PC-9 (cell line): ENCODE measurements at regions of chr1 and their contacts with region 1.

Region 1: GRCh38 chr1:20212685-20213331 is 26.5 kb upstream of the PLA2G2C start:
- DNase-seq: peak; percentile 90 to 92
- H3K4me3 ChIP-seq: peak overlapping the region; percentile 47; the same call in 1 of the 2 replicates
- H3K27ac ChIP-seq: peak overlapping the region; percentile 99
- H3K4me1 ChIP-seq: peaks cover 58% of the 10 kb centered on the region
- H3K27me3 ChIP-seq: no peaks in the 10 kb centered on the region
- CTCF ChIP-seq: peak; percentile 91

Region 2: GRCh38 chr1:19534281-19534680 is 678.5 kb before region 1 on chr1:
- CTCF ChIA-PET with region 1: no interaction called
- POLR2A ChIA-PET with region 1: no interaction called
- intact Hi-C with region 1: no loop called
- DNase-seq: no peak
- H3K4me3 ChIP-seq: no peak overlapping the region
- H3K27ac ChIP-seq: no peak overlapping the region
- H3K4me1 ChIP-seq: no peaks in the 10 kb centered on the region
- H3K27me3 ChIP-seq: no peaks in the 10 kb centered on the region
- CTCF ChIP-seq: no peak

Region 3: GRCh38 chr1:19974822-19975416 is 237.9 kb before region 1 on chr1:
- CTCF ChIA-PET with region 1: no interaction called
- POLR2A ChIA-PET with region 1: interaction called, 10 read pairs
- intact Hi-C with region 1: no loop called
- DNase-seq: peak; percentile 58 to 62
- H3K4me3 ChIP-seq: no peak overlapping the region
- H3K27ac ChIP-seq: no peak overlapping the region
- H3K4me1 ChIP-seq: no peaks in the 10 kb centered on the region
- H3K27me3 ChIP-seq: no peaks in the 10 kb centered on the region
- CTCF ChIP-seq: peak; percentile 66

Region 4: GRCh38 chr1:20194757-20195461 is 17.9 kb before region 1 on chr1:
- CTCF ChIA-PET with region 1: interaction called, 18 read pairs
- POLR2A ChIA-PET with region 1: interaction called, 3 read pairs
- intact Hi-C with region 1: no loop called
- DNase-seq: peak in 1 of 2 experiments; percentile 49
- H3K4me3 ChIP-seq: no peak overlapping the region
- H3K27ac ChIP-seq: no peak overlapping the region
- H3K4me1 ChIP-seq: peaks cover 19% of the 10 kb centered on the region
- H3K27me3 ChIP-seq: no peaks in the 10 kb centered on the region
- CTCF ChIP-seq: peak; percentile 70

Region 5: GRCh38 chr1:20308569-20308968 is 95.8 kb after region 1 on chr1:
- CTCF ChIA-PET with region 1: interaction called, 11 read pairs
- POLR2A ChIA-PET with region 1: no interaction called
- intact Hi-C with region 1: no loop called
- DNase-seq: no peak
- H3K4me3 ChIP-seq: no peak overlapping the region
- H3K27ac ChIP-seq: no peak overlapping the region
- H3K4me1 ChIP-seq: no peaks in the 10 kb centered on the region
- H3K27me3 ChIP-seq: no peaks in the 10 kb centered on the region
- CTCF ChIP-seq: no peak

Region 6: GRCh38 chr1:20376880-20377494 is 164.2 kb after region 1 on chr1:
- CTCF ChIA-PET with region 1: interaction called, 5 read pairs
- POLR2A ChIA-PET with region 1: no interaction called
- intact Hi-C with region 1: loop called (anchors 2 kb)
- DNase-seq: peak in 1 of 2 experiments; percentile 53
- H3K4me3 ChIP-seq: no peak overlapping the region
- H3K27ac ChIP-seq: no peak overlapping the region
- H3K4me1 ChIP-seq: peaks cover 14% of the 10 kb centered on the region
- H3K27me3 ChIP-seq: no peaks in the 10 kb centered on the region
- CTCF ChIP-seq: peak; percentile 76

Region 7: GRCh38 chr1:20511518-20512370 is 298.9 kb after region 1 on chr1:
- CTCF ChIA-PET with region 1: interaction called, 13 read pairs
- POLR2A ChIA-PET with region 1: no interaction called
- intact Hi-C with region 1: no loop called
- DNase-seq: peak in 1 of 2 experiments; percentile 70
- H3K4me3 ChIP-seq: no peak overlapping the region
- H3K27ac ChIP-seq: peak overlapping the region; percentile 64
- H3K4me1 ChIP-seq: peaks cover 13% of the 10 kb centered on the region
- H3K27me3 ChIP-seq: no peaks in the 10 kb centered on the region
- CTCF ChIP-seq: no peak